Vagina (tissue), 2 donors: ENCODE measurements at regions of chr5 and their contacts with region 1.

Region 1: DNA sequence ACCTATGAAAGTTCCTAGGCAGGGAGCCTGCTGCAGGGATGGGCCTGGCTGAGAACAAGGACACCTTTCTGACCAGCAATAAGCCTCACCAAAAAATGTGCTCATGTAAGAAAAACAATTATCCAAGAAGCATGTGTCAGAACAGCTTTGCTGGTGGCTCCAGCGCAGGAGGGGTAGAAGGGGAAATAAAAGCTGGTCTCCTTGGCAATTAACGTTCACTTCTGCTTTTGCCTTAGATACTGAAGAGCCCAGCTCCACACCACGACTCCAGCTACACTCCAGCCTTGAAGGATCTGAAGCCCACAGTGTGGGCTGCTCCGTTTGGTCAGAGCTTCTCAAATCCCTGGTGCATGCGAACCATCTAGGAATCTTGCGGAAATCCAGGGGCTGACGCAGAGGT is 107.6 kb upstream of the PHYKPL start:
- DNase-seq: no peak
- H3K4me3 ChIP-seq: no peak overlapping the region
- H3K27ac ChIP-seq: no peak overlapping the region
- H3K4me1 ChIP-seq: peaks cover 7% of the 10 kb centered on the region
- H3K27me3 ChIP-seq: no peaks in the 10 kb centered on the region
- CTCF ChIP-seq: no peak
- POLR2A ChIP-seq: no peak

Region 2: GRCh38 chr5:176679365-176680225 is 1660.6 kb before region 1 on chr5:
- intact Hi-C with region 1: loop called (anchors 10 kb)
- DNase-seq: no peak
- H3K4me3 ChIP-seq: no peak overlapping the region
- H3K27ac ChIP-seq: no peak overlapping the region
- H3K4me1 ChIP-seq: peaks cover 9% of the 10 kb centered on the region
- H3K27me3 ChIP-seq: peaks cover 5% of the 10 kb centered on the region
- CTCF ChIP-seq: no peak
- POLR2A ChIP-seq: no peak